MCF 10A (cell line): ENCODE measurements at regions of chr17 and their contacts with region 1.

Region 1: GRCh38 chr17:58517734-58518609 is 3.5 kb upstream of the MTMR4 start:
- DNase-seq: peak; percentile 100
- H3K4me3 Mint-ChIP-seq: peak overlapping the region; percentile 89
- H3K27ac Mint-ChIP-seq: peak overlapping the region; percentile 95
- H3K4me1 Mint-ChIP-seq: peaks cover 26% of the 10 kb centered on the region
- H3K27me3 Mint-ChIP-seq: no peaks in the 10 kb centered on the region
- CTCF ChIP-seq: no peak

Region 2: GRCh38 chr17:58189436-58190146 is 328.4 kb before region 1 on chr17:
- CTCF ChIA-PET with region 1: no interaction called
- POLR2A ChIA-PET with region 1: no interaction called
- intact Hi-C with region 1: no loop called
- DNase-seq: peak; percentile 87
- H3K4me3 Mint-ChIP-seq: no peak overlapping the region
- H3K27ac Mint-ChIP-seq: no peak overlapping the region
- H3K4me1 Mint-ChIP-seq: peaks cover 12% of the 10 kb centered on the region
- H3K27me3 Mint-ChIP-seq: peaks cover 16% of the 10 kb centered on the region
- CTCF ChIP-seq: no peak

Region 3: DNA sequence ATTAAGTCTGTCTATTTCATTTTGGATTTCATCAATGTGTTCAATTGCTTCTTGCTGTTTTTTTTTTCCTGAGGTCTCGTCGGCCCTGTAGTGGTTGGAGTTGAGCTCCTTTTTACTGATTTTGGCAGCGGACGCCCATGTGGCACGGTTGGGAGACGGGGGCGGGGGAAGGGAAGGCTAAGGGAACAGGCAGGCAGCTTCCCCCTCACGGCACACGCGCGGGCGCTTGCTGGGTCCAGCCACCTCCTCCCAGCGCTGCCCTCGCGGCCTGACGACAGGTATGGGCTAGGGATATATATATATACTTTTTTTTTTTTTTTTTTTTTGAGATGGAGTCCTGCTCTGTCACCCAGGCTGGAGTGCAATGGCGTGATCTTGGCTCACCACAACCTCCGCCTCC is 41.2 kb before region 1 on chr17:
- CTCF ChIA-PET with region 1: no interaction called
- POLR2A ChIA-PET with region 1: no interaction called
- intact Hi-C with region 1: no loop called
- DNase-seq: no peak
- H3K4me3 Mint-ChIP-seq: no peak overlapping the region
- H3K27ac Mint-ChIP-seq: no peak overlapping the region
- H3K4me1 Mint-ChIP-seq: no peaks in the 10 kb centered on the region
- H3K27me3 Mint-ChIP-seq: peaks cover 52% of the 10 kb centered on the region
- CTCF ChIP-seq: no peak

Region 4: GRCh38 chr17:58531661-58532554 is 13.9 kb after region 1 on chr17:
- CTCF ChIA-PET with region 1: interaction called, 10 read pairs
- POLR2A ChIA-PET with region 1: interaction called, 9 read pairs
- intact Hi-C with region 1: no loop called
- DNase-seq: peak; percentile 37
- H3K4me3 Mint-ChIP-seq: peak overlapping the region; percentile 40
- H3K27ac Mint-ChIP-seq: no peak overlapping the region
- H3K4me1 Mint-ChIP-seq: peaks cover 24% of the 10 kb centered on the region
- H3K27me3 Mint-ChIP-seq: no peaks in the 10 kb centered on the region
- CTCF ChIP-seq: no peak

Region 5: DNA sequence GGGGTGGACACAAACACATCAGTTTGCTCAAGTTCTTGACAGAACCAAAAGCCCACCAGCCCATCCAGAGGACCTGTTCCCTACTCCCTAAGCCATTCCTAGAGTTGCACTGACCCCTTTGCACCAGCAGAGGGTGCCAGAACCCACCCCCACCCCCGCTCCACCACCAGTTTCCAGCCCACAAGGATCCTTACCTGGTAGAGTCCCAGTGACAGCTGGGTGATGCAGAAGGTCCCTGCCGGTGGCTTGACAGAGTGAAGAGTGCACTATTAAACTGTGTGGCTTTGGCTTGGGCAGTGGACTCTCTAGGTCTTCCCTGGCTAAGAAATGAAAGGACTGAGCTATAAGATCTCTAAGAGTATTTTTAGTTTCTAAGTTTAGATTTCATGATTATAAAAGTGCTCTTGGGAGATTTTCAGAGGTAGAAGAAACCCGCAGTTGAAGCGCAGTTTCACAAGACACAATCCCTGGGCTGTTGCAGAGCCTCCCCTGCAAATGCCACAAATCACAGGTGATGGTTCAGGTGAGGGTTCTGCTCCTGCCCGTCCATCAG is 69.8 kb after region 1 on chr17:
- CTCF ChIA-PET with region 1: interaction called, 7 read pairs
- POLR2A ChIA-PET with region 1: interaction called, 7 read pairs
- intact Hi-C with region 1: loop called (anchors 1 kb)
- DNase-seq: peak; percentile 65
- H3K4me3 Mint-ChIP-seq: no peak overlapping the region
- H3K27ac Mint-ChIP-seq: no peak overlapping the region
- H3K4me1 Mint-ChIP-seq: no peaks in the 10 kb centered on the region
- H3K27me3 Mint-ChIP-seq: peaks cover 13% of the 10 kb centered on the region
- CTCF ChIP-seq: peak; percentile 89

Region 6: GRCh38 chr17:58692239-58693055 is 174.5 kb after region 1 on chr17 and contains the start of gene RAD51C:
- CTCF ChIA-PET with region 1: interaction called, 8 read pairs
- POLR2A ChIA-PET with region 1: interaction called, 41 read pairs
- intact Hi-C with region 1: loop called (anchors 1 kb)
- DNase-seq: peak; percentile 84
- H3K4me3 Mint-ChIP-seq: peak within 1 kb of the TSS; percentile 97
- H3K27ac Mint-ChIP-seq: peak within 1 kb of the TSS; percentile 91
- H3K4me1 Mint-ChIP-seq: peaks cover 12% of the 10 kb centered on the region
- H3K27me3 Mint-ChIP-seq: no peaks in the 10 kb centered on the region
- CTCF ChIP-seq: no peak
- total RNA-seq, gene RAD51C: 48.3 and 59.5 TPM in 2 replicates

Region 7: DNA sequence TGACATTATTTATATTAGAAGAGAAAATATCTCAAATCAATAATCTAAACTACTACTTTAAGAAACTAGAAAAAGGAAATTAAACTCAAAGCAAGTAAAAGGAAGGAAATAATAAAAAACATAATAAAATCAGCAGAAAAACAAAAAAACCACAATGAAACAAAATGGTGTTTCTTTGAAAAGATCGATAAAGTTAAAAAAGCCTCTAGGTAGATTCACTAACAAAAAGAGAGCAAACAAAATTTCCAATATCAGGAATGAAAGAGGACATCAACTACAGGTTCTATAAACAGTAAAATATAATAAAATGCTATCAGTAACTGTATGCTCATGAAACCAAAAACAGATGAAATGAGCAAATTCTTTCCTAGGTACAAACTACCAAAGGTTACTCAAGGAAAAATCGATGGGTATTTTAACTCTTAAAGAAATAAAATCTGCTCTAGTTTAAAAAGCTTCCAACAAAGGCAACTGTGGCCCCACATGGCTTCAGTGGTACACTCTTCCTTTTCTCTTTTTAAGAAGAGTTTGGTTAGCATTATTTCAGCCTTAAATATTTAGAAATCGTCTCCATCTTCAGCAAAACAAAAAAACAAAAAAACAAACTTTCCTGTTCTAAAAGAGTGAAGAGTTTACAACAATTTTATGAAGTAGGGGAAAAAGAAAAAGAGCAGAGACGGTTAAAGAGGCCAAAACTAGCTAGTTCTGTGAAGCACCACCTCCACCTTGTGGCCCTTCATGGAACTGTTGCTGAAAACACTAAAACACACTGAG is 486.6 kb after region 1 on chr17:
- CTCF ChIA-PET with region 1: interaction called, 12 read pairs
- POLR2A ChIA-PET with region 1: interaction called, 11 read pairs
- intact Hi-C with region 1: loop called (anchors 1 kb)
- DNase-seq: peak; percentile 75
- H3K4me3 Mint-ChIP-seq: no peak overlapping the region
- H3K27ac Mint-ChIP-seq: peak overlapping the region; percentile 19
- H3K4me1 Mint-ChIP-seq: no peaks in the 10 kb centered on the region
- H3K27me3 Mint-ChIP-seq: no peaks in the 10 kb centered on the region
- CTCF ChIP-seq: peak; percentile 95